CD8-positive, alpha-beta T cell (primary cell): ENCODE measurements at regions of chr12 and their contacts with region 1.

Region 1: GRCh38 chr12:69239352-69239921 is at the start of gene CPSF6:
- DNase-seq: peak; percentile 94 to 99 (median 96)
- ATAC-seq: peak; percentile 88
- H3K4me3 ChIP-seq: peak within 1 kb of the TSS; percentile 84 to 95
- H3K4me3 Mint-ChIP-seq: peak within 1 kb of the TSS; percentile 95
- H3K27ac ChIP-seq: peak within 1 kb of the TSS; percentile 68 to 89
- H3K27ac Mint-ChIP-seq: peak within 1 kb of the TSS; percentile 99
- H3K4me1 ChIP-seq: peaks cover 36% of the 10 kb centered on the region
- H3K4me1 Mint-ChIP-seq: peaks cover 51% of the 10 kb centered on the region
- H3K27me3 ChIP-seq: no peaks in the 10 kb centered on the region
- H3K27me3 Mint-ChIP-seq: no peaks in the 10 kb centered on the region
- CTCF ChIP-seq: no peak
- total RNA-seq, gene CPSF6: 78.9 to 81.3 TPM

Region 2: GRCh38 chr12:68331869-68332727 is 907.3 kb before region 1 on chr12 and contains the start of gene MDM1:
- CTCF ChIA-PET with region 1: no interaction called
- POLR2A ChIA-PET with region 1: no interaction called
- intact Hi-C with region 1: loop called in 1 of 2 experiments (anchors 5 kb)
- DNase-seq: peak; percentile 88 to 99 (median 96)
- ATAC-seq: peak; percentile 95
- H3K4me3 ChIP-seq: peak within 1 kb of the TSS; percentile 56 to 71
- H3K4me3 Mint-ChIP-seq: peak within 1 kb of the TSS; percentile 88
- H3K27ac ChIP-seq: peak within 1 kb of the TSS; percentile 45 to 46
- H3K27ac Mint-ChIP-seq: peak within 1 kb of the TSS; percentile 89
- H3K4me1 ChIP-seq: peaks cover 24% of the 10 kb centered on the region
- H3K4me1 Mint-ChIP-seq: peaks cover 49% of the 10 kb centered on the region
- H3K27me3 ChIP-seq: no peaks in the 10 kb centered on the region
- H3K27me3 Mint-ChIP-seq: no peaks in the 10 kb centered on the region
- CTCF ChIP-seq: no peak
- total RNA-seq, gene MDM1: 10.6 to 12.0 TPM

Region 3: GRCh38 chr12:68807576-68808387 is 431.7 kb before region 1 on chr12 and contains the start of gene MDM2:
- CTCF ChIA-PET with region 1: no interaction called
- POLR2A ChIA-PET with region 1: no interaction called
- intact Hi-C with region 1: loop called (anchors 5 to 10 kb)
- DNase-seq: peak; percentile 94 to 99 (median 97)
- ATAC-seq: peak; percentile 91
- H3K4me3 ChIP-seq: peak within 1 kb of the TSS; percentile 97
- H3K4me3 Mint-ChIP-seq: peak within 1 kb of the TSS; percentile 95
- H3K27ac ChIP-seq: peak within 1 kb of the TSS; percentile 86 to 95
- H3K27ac Mint-ChIP-seq: peak within 1 kb of the TSS; percentile 97
- H3K4me1 ChIP-seq: peaks cover 24% of the 10 kb centered on the region
- H3K4me1 Mint-ChIP-seq: peaks cover 30% of the 10 kb centered on the region
- H3K27me3 ChIP-seq: no peaks in the 10 kb centered on the region
- H3K27me3 Mint-ChIP-seq: no peaks in the 10 kb centered on the region
- CTCF ChIP-seq: peak; percentile 66
- total RNA-seq, gene MDM2: 95.1 to 98.0 TPM

Region 4: GRCh38 chr12:69157023-69157655 is 82.3 kb before region 1 on chr12:
- CTCF ChIA-PET with region 1: interaction called, 31 read pairs
- POLR2A ChIA-PET with region 1: interaction called, 3 read pairs
- intact Hi-C with region 1: loop called in 1 of 2 experiments (anchors 1 kb)
- DNase-seq: peak; percentile 78 to 93 (median 87)
- ATAC-seq: peak; percentile 97
- H3K4me3 ChIP-seq: no peak overlapping the region
- H3K4me3 Mint-ChIP-seq: peak overlapping the region; percentile 65
- H3K27ac ChIP-seq: no peak overlapping the region
- H3K27ac Mint-ChIP-seq: no peak overlapping the region
- H3K4me1 ChIP-seq: peaks cover 9% of the 10 kb centered on the region
- H3K4me1 Mint-ChIP-seq: peaks cover 19% of the 10 kb centered on the region
- H3K27me3 ChIP-seq: no peaks in the 10 kb centered on the region
- H3K27me3 Mint-ChIP-seq: peaks cover 7% of the 10 kb centered on the region
- CTCF ChIP-seq: peak; percentile 78

Region 5: DNA sequence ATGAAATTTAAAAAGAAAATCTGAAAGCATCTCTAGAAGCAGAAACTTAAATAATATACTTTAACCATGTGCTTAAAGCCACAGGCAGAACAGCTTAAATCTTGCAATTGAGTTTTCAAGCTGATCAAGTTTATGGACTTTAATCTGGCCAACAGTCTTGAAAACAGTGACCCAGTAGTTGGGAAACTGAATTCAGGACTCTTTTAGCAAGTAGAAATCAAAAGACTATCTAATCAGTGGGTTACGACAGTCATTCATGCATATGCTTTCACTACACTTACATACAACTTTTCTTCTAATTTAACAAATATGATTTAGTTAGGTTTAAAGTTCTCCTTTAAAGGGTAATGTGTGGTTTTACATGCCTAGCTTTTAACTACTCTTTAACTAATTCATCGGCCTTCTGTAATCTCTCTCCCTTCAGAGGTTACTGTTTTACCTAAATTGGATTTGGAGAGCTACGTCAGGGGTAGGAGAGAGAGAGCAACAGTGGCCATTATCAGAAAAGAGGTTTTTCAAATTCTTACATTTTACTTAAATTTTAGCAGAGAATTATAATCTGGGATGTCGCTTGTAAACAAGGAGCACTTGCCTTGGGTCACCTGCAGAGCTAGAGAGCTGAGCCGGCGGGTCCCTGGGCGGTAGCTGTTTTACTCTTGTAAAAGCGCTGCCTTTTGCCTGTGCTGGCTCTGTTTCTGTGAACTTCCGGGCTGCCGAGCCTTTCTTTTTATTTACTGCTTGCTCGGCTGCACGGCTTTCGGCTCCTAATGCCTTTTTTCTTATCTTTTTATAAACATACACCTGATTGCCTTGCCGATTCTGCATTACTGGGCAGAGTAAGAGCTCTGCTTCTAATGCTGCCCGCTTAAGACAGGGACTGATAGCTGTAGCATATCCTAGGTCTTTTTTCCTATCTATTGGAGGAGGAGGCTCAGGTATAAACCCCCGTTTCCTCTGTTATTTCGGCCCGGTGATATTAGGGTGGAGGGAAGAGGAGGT is 91.3 kb after region 1 on chr12:
- CTCF ChIA-PET with region 1: no interaction called
- POLR2A ChIA-PET with region 1: interaction called, 5 read pairs
- intact Hi-C with region 1: loop called in 1 of 2 experiments (anchors 2 kb)
- DNase-seq: peak; percentile 48 to 85 (median 65)
- ATAC-seq: peak; percentile 67
- H3K4me3 ChIP-seq: peak overlapping the region; percentile 53 to 61
- H3K4me3 Mint-ChIP-seq: peak overlapping the region; percentile 93
- H3K27ac ChIP-seq: peak overlapping the region; percentile 80 to 86
- H3K27ac Mint-ChIP-seq: peak overlapping the region; percentile 99
- H3K4me1 ChIP-seq: peaks cover 51% of the 10 kb centered on the region
- H3K4me1 Mint-ChIP-seq: peaks cover 56% of the 10 kb centered on the region
- H3K27me3 ChIP-seq: no peaks in the 10 kb centered on the region
- H3K27me3 Mint-ChIP-seq: no peaks in the 10 kb centered on the region
- CTCF ChIP-seq: no peak

Region 6: GRCh38 chr12:69470189-69471075 is 231.0 kb after region 1 on chr12 and contains the start of gene FRS2:
- CTCF ChIA-PET with region 1: no interaction called
- POLR2A ChIA-PET with region 1: no interaction called
- intact Hi-C with region 1: loop called (anchors 5 kb)
- DNase-seq: peak; percentile 66 to 91 (median 84)
- ATAC-seq: peak; percentile 97
- H3K4me3 ChIP-seq: peak within 1 kb of the TSS; percentile 86 to 88
- H3K4me3 Mint-ChIP-seq: peak within 1 kb of the TSS; percentile 98
- H3K27ac ChIP-seq: peak within 1 kb of the TSS; percentile 76 to 82
- H3K27ac Mint-ChIP-seq: peak within 1 kb of the TSS; percentile 97
- H3K4me1 ChIP-seq: peaks cover 30% of the 10 kb centered on the region
- H3K4me1 Mint-ChIP-seq: peaks cover 46% of the 10 kb centered on the region
- H3K27me3 ChIP-seq: no peaks in the 10 kb centered on the region
- H3K27me3 Mint-ChIP-seq: no peaks in the 10 kb centered on the region
- CTCF ChIP-seq: no peak
- total RNA-seq, gene FRS2: 31.1 to 32.4 TPM

Region 7: GRCh38 chr12:69738351-69739286 is 499.2 kb after region 1 on chr12 and contains the start of gene RAB3IP:
- CTCF ChIA-PET with region 1: no interaction called
- POLR2A ChIA-PET with region 1: no interaction called
- intact Hi-C with region 1: loop called (anchors 2 kb)
- DNase-seq: peak; percentile 84 to 95 (median 93)
- ATAC-seq: peak; percentile 87
- H3K4me3 ChIP-seq: peak within 1 kb of the TSS; percentile 64 to 79
- H3K4me3 Mint-ChIP-seq: peak within 1 kb of the TSS; percentile 82
- H3K27ac ChIP-seq: peak within 1 kb of the TSS; percentile 73
- H3K27ac Mint-ChIP-seq: peak within 1 kb of the TSS; percentile 69
- H3K4me1 ChIP-seq: peaks cover 11% of the 10 kb centered on the region
- H3K4me1 Mint-ChIP-seq: peaks cover 24% of the 10 kb centered on the region
- H3K27me3 ChIP-seq: no peaks in the 10 kb centered on the region
- H3K27me3 Mint-ChIP-seq: peaks cover 4% of the 10 kb centered on the region
- CTCF ChIP-seq: peak; percentile 89
- total RNA-seq, gene RAB3IP: 14.8 to 15.1 TPM